Prostate gland (tissue), 2 donors: ENCODE measurements at regions of chr5 and their contacts with region 1.

Region 1: GRCh38 chr5:69334793-69335268 is 2.2 kb upstream of the CCDC125 start:
- DNase-seq: peak; percentile 85
- H3K4me3 ChIP-seq: no peak overlapping the region
- H3K27ac ChIP-seq: peak overlapping the region; percentile 51 to 52
- H3K4me1 ChIP-seq: no peaks in the 10 kb centered on the region
- H3K27me3 ChIP-seq: no peaks in the 10 kb centered on the region
- CTCF ChIP-seq: peak; percentile 47 to 82 (median 76)
- POLR2A ChIP-seq: no peak

Region 2: GRCh38 chr5:69042915-69043658 is 291.7 kb before region 1 on chr5:
- intact Hi-C with region 1: loop called (anchors 2 kb)
- DNase-seq: peak; percentile 73
- H3K4me3 ChIP-seq: peak overlapping the region; percentile 17 to 26
- H3K27ac ChIP-seq: peak overlapping the region; percentile 63 to 74
- H3K4me1 ChIP-seq: no peaks in the 10 kb centered on the region
- H3K27me3 ChIP-seq: no peaks in the 10 kb centered on the region
- CTCF ChIP-seq: peak; percentile 37 to 93 (median 82)
- POLR2A ChIP-seq: no peak

Region 3: DNA sequence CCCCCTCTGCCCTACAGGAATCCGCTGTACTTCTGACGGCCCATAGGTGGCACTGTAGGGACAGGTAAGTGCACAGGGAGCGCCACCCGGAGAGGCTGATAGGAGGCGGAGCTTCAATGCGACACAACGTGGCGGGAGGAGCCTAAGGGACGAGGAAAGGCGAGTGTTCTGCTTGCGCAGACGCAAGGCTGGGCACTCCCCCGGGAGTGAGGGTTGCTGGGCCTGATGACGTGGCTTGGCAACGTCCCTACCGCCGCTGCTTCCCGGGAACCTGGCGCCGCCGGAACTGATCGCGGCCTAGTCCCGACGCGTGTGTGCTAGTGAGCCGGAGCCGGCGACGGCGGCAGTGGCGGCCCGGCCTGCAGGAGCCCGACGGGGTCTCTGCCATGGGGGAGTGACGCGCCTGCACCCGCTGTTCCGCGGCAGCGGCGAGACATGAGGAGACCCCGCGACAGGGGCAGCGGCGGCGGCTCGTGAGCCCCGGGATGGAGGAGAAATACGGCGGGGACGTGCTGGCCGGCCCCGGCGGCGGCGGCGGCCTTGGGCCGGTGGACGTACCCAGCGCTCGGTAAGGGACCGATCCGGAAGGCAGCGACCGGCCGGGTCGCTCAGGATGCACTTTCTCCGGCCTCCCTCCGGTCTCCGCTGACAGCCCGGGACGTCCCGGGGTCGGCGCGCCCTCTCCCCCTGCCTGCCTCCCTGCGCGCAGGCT is 240.9 kb before region 1 on chr5 and contains the start of gene SLC30A5:
- intact Hi-C with region 1: loop called (anchors 5 kb)
- DNase-seq: peak; percentile 99
- H3K4me3 ChIP-seq: peak within 1 kb of the TSS; percentile 85 to 92
- H3K27ac ChIP-seq: peak within 1 kb of the TSS; percentile 93 to 96
- H3K4me1 ChIP-seq: peaks cover 7% of the 10 kb centered on the region
- H3K27me3 ChIP-seq: no peaks in the 10 kb centered on the region
- CTCF ChIP-seq: peak; percentile 84 to 98 (median 96)
- POLR2A ChIP-seq: peak; percentile 94
- total RNA-seq, gene SLC30A5: 72.2 to 79.3 TPM

Region 4: DNA sequence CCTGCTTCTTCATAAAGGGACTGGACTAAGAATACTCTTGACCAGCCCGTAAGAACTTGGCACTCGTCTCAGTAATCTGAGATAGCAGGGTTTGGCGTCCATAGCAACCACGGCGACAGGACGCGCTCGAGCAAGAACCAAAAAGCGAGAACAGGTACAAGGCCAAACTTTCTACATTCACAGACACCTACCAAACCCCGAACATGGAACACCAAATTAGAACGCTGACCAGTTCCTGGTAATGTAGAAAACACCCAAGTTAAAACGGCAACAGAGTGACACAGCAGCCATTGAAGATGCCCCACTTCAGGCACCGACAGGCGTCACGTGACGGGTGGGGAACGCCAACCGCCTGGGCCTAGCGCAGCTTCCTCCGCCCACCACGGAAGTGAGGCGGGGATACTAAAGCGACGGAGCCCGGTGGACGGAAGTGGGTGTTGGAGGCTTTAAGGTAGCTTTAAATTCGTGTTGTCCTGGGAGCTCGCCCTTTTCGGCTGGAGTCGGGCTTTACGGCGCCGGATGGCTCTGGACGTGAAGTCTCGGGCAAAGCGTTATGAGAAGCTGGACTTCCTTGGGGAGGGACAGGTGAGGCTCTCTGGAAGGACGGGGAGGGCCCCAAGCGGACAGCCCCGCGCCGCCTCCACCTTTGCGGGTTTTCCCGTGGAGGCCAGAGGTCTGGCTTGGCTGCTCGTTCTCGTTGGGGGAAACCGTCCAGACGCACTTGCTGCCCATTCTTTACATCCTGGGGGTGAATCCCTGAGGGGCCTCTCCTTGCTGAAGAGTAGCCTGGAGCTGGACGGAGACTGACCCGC is 100.2 kb before region 1 on chr5 and contains the start of gene CDK7:
- intact Hi-C with region 1: loop called (anchors 5 kb)
- DNase-seq: peak; percentile 95
- H3K4me3 ChIP-seq: peak within 1 kb of the TSS; percentile 76 to 79
- H3K27ac ChIP-seq: peak within 1 kb of the TSS; percentile 83 to 84
- H3K4me1 ChIP-seq: peaks cover 5% of the 10 kb centered on the region
- H3K27me3 ChIP-seq: no peaks in the 10 kb centered on the region
- CTCF ChIP-seq: peak in 2 of 4 experiments; percentile 3 to 38
- POLR2A ChIP-seq: peak; percentile 73
- total RNA-seq, gene CDK7: 25.5 to 99.1 TPM

Region 5: DNA sequence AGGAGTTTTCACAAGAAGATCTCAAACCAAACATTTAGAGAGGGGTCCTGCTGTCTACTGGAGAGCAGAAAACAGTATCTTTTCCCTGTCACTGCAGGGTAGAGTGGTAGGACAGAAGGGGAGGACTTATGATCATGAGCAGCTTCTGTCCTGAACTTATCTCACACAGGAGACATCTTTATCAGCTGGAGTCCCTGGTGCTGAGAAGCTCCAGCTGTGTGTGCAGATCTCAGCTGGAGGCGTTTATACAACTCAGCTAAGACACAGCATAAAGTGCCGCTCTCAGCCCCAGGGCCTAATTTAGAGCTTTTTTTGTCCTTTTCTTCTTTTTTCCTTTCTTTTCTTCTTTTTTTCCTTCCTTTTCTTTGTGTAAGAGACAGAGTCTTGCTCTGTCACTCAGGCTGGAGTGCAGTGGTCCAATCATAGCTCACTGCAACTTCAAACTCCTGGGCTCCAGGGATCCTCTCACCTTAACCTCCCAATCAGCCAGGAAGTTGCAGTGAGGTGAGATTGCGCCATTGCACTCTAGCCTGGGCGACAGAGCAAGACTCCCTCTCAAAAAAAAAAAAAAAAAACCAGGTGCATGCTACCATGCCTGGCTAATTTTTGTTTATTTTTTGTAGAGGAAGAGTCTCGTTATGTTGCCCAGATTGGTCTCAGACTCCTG is 34.2 kb before region 1 on chr5:
- intact Hi-C with region 1: no loop called
- DNase-seq: no peak
- H3K4me3 ChIP-seq: no peak overlapping the region
- H3K27ac ChIP-seq: no peak overlapping the region
- H3K4me1 ChIP-seq: no peaks in the 10 kb centered on the region
- H3K27me3 ChIP-seq: no peaks in the 10 kb centered on the region
- CTCF ChIP-seq: no peak
- POLR2A ChIP-seq: no peak

Region 6: DNA sequence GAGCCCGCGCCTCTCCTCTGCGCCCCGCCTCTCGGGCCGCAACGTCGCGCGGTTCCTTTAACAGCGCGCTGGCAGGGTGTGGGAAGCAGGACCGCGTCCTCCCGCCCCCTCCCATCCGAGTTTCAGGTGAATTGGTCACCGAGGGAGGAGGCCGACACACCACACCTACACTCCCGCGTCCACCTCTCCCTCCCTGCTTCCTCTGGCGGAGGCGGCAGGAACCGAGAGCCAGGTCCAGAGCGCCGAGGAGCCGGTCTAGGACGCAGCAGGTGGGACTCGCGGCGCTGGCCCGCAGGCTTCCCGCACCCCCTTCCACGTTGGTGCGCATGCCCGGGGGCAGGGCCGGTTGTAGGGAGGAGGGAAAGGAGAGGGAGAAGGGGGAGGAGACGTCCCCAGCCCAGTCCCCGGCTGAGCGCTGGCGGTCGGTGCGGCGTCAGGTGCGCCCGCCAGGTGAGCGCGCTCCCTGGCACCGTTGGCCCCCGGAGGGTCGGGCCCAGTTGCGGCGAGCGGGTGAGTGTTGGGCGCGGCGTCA is 157.6 kb after region 1 on chr5 and contains the start of gene OCLN:
- intact Hi-C with region 1: no loop called
- DNase-seq: peak; percentile 77
- H3K4me3 ChIP-seq: peak within 1 kb of the TSS; percentile 59 to 85
- H3K27ac ChIP-seq: peak within 1 kb of the TSS; percentile 86
- H3K4me1 ChIP-seq: no peaks in the 10 kb centered on the region
- H3K27me3 ChIP-seq: no peaks in the 10 kb centered on the region
- CTCF ChIP-seq: peak in 2 of 4 experiments; percentile 28 to 32
- POLR2A ChIP-seq: peak; percentile 90
- total RNA-seq, gene OCLN: 20.2 to 26.8 TPM